A673 (cell line): ENCODE measurements at regions of chr1 and their contacts with region 1.

Region 1: DNA sequence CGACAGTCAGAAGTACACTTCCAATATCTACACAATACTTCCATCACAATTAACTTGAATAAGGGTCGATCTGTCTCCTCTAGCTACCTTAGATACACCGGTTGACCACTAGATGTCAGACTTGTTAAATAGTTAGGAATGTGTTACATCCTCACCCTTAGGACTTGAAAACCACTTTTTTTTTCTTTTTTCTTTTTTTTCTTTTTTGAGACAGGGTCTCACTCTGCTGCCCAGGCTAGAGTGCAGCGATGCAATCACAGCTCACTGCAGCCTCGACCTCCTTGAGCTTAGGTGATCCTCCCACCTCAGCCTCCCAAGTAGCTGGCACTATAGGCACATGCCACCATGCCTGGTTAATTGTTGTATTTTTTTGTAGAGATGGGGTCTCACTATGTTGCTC is 120.4 kb upstream of the GREM2 start:
- DNase-seq: peak; percentile 51
- H3K4me3 ChIP-seq: no peak overlapping the region
- H3K27ac ChIP-seq: no peak overlapping the region
- H3K4me1 ChIP-seq: no peaks in the 10 kb centered on the region
- H3K27me3 ChIP-seq: no peaks in the 10 kb centered on the region
- CTCF ChIP-seq: peak; percentile 58

Region 2: DNA sequence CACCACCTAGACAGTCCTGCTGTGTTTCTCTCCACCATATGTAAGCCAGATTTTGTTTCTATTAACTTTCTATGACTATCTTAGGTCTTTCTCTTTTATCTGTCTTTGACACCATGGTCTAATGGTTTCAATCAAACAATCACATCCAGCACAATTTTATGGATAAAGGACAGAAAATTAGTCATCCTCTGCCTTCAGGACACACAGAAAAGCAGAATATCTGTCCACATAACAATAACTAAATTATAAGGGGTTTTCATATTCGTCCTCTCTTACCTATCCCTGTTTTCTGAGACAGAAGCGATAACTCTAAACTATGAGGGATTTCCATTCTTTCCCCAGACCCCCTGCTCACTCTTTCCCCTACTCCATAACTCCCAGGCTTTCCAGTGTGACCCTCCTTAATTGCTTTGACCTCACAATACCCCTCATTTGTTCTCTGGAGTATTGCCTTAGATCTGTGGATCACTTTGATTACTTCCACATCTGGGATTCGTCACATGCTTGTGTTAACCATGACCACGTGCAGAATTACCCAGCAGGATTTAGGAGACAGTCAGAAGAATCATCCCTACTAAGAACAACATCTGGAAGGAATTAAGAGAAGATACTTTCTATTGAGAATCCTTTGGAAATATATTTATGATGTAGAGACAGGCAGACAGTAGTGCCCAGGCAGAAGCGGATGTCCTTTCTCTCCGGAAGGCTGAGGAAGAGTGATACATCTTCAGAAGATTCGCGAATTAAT is 12.3 kb before region 1 on chr1:
- CTCF ChIA-PET with region 1: no interaction called
- POLR2A ChIA-PET with region 1: no interaction called
- intact Hi-C with region 1: no loop called
- DNase-seq: peak; percentile 38
- H3K4me3 ChIP-seq: no peak overlapping the region
- H3K27ac ChIP-seq: no peak overlapping the region
- H3K4me1 ChIP-seq: no peaks in the 10 kb centered on the region
- H3K27me3 ChIP-seq: no peaks in the 10 kb centered on the region
- CTCF ChIP-seq: no peak

Region 3: DNA sequence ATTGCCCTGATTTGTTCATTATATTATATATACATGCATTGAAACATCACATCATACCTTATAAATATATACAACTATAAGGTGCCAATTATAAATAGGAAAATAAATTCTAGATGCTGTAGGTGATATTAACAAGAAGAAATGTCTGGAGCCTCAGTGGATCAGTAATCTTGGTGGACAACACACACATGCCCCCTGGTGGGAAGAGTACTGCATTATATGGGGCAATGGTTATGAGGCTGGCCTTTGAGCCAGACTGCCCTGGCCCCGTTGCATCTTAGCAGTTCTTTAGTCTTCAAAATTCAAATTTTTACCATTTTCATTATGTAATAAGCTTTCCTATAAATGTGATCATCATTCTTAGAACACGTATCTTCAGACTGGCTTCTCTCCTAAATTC is 214.5 kb after region 1 on chr1:
- CTCF ChIA-PET with region 1: no interaction called
- POLR2A ChIA-PET with region 1: no interaction called
- intact Hi-C with region 1: loop called (anchors 5 kb)
- DNase-seq: peak; percentile 12
- H3K4me3 ChIP-seq: no peak overlapping the region
- H3K27ac ChIP-seq: no peak overlapping the region
- H3K4me1 ChIP-seq: no peaks in the 10 kb centered on the region
- H3K27me3 ChIP-seq: no peaks in the 10 kb centered on the region
- CTCF ChIP-seq: peak; percentile 33

Region 4: GRCh38 chr1:241408170-241408569 is 675.8 kb after region 1 on chr1:
- CTCF ChIA-PET with region 1: no interaction called
- POLR2A ChIA-PET with region 1: no interaction called
- intact Hi-C with region 1: loop called (anchors 10 kb)
- DNase-seq: no peak
- H3K4me3 ChIP-seq: no peak overlapping the region
- H3K27ac ChIP-seq: no peak overlapping the region
- H3K4me1 ChIP-seq: no peaks in the 10 kb centered on the region
- H3K27me3 ChIP-seq: no peaks in the 10 kb centered on the region
- CTCF ChIP-seq: 0 out of 2 replicates have a peak, but pooled peaks have one; percentile 30